Activated CD4-positive, alpha-beta memory T cell treated with anti-CD3 and anti-CD28 coated beads for 36 hours (primary cell): ENCODE measurements at regions of chr4 and their contacts with region 1.

Region 1: DNA sequence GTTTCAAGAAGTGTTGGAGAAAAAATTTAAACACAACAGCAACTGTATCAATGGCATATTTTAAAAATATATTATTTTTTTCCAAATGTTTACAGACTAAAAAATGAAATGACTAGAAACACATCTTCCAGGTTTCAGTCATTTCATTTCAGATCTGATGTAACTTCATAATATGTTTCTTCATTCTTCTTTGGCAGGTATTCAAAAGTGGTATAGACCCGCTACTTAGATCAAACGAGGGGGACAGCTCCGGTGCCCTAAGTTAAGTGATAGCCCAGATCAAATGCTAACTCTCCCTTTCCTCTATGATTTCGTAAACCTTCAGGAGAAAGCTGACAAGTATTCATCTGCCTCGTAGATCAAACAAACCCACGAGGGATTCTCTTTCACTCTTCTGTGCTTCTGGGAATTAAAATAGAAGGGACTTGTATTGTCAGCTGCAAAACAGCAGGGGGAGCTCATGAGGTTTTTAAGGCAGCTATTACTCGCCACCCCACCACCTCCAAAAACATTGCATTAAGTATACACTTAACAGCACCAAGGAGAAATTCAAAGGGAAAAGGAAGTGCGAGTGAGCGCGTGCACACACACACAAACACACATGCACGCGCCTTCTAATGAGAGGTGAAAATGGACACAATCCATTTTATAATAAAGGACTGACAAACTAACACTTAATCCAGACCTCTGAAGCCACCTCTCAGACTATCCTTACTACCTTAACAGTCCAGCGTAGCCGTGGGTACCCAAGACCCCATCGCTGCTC is 21.4 kb downstream of the HELT start:
- DNase-seq: peak; percentile 53
- H3K4me3 Mint-ChIP-seq: peak overlapping the region; percentile 51
- H3K27ac Mint-ChIP-seq: peak overlapping the region; percentile 24
- H3K4me1 Mint-ChIP-seq: peaks cover 4% of the 10 kb centered on the region
- H3K27me3 Mint-ChIP-seq: peaks cover 7% of the 10 kb centered on the region

Region 2: GRCh38 chr4:185023471-185023870 is 16.2 kb before region 1 on chr4:
- CTCF ChIA-PET with region 1: interaction called, 10 read pairs
- POLR2A ChIA-PET with region 1: no interaction called
- intact Hi-C with region 1: no loop called
- DNase-seq: no peak
- H3K4me3 Mint-ChIP-seq: no peak overlapping the region
- H3K27ac Mint-ChIP-seq: no peak overlapping the region
- H3K4me1 Mint-ChIP-seq: peaks cover 18% of the 10 kb centered on the region
- H3K27me3 Mint-ChIP-seq: peaks cover 69% of the 10 kb centered on the region

Region 3: GRCh38 chr4:185128272-185129119 is 88.8 kb after region 1 on chr4:
- CTCF ChIA-PET with region 1: interaction called, 87 read pairs
- POLR2A ChIA-PET with region 1: no interaction called
- intact Hi-C with region 1: no loop called
- DNase-seq: peak; percentile 38
- H3K4me3 Mint-ChIP-seq: peak overlapping the region; percentile 57
- H3K27ac Mint-ChIP-seq: no peak overlapping the region
- H3K4me1 Mint-ChIP-seq: peaks cover 6% of the 10 kb centered on the region
- H3K27me3 Mint-ChIP-seq: peaks cover 30% of the 10 kb centered on the region

Region 4: GRCh38 chr4:185142912-185143595 is 103.4 kb after region 1 on chr4 and contains the start of gene SLC25A4:
- CTCF ChIA-PET with region 1: interaction called, 15 read pairs
- POLR2A ChIA-PET with region 1: no interaction called
- intact Hi-C with region 1: no loop called
- DNase-seq: peak; percentile 90
- H3K4me3 Mint-ChIP-seq: peak within 1 kb of the TSS; percentile 80
- H3K27ac Mint-ChIP-seq: no peak within 1 kb of the TSS
- H3K4me1 Mint-ChIP-seq: peaks cover 13% of the 10 kb centered on the region
- H3K27me3 Mint-ChIP-seq: peaks cover 25% of the 10 kb centered on the region
- total RNA-seq, gene SLC25A4: 7.7 to 8.4 TPM

Region 5: DNA sequence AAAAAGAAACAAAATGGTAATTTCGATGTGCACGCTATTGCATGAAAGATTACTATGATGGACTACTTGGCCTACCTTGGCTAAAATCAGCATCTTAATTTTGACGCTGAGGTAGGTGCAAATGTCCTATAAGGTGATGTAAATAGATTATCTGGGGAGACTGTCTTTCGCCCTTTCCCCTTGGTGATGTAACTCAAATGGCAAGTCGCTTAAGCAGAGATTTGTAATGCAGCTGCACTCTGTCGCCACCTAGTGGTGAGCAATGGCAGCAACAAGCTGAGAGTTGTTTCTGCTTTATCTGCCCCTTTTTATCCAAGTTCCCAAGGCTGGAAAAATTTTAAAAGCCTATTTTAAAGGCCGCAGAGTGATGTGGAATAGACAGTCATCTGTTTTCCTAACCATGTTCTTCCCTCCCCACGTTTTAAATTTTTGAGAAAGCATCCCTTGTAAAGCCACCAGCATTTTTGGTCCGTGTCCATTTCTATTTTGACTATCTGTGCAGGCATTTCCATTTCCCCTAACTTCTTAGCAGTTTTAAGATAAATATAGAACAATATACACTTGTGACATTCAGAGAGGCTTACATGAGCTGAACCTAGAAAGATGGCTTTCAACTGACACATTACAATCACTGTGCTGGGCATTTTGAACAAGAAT is 558.0 kb after region 1 on chr4:
- CTCF ChIA-PET with region 1: interaction called, 4 read pairs
- POLR2A ChIA-PET with region 1: no interaction called
- intact Hi-C with region 1: loop called (anchors 10 kb)
- DNase-seq: peak; percentile 78
- H3K4me3 Mint-ChIP-seq: no peak overlapping the region
- H3K27ac Mint-ChIP-seq: no peak overlapping the region
- H3K4me1 Mint-ChIP-seq: peaks cover 2% of the 10 kb centered on the region
- H3K27me3 Mint-ChIP-seq: peaks cover 19% of the 10 kb centered on the region